Endothelial cell of umbilical vein (primary cell): ENCODE measurements at regions of chr11 and their contacts with region 1.

Region 1: GRCh38 chr11:47213985-47214564 is 699 bp upstream of the DDB2 start:
- DNase-seq: peak; percentile 77
- H3K4me3 ChIP-seq: peak overlapping the region in 2 of 3 experiments; percentile 18 to 58
- H3K27ac ChIP-seq: peak overlapping the region; percentile 40
- H3K4me1 ChIP-seq: peaks cover 23% of the 10 kb centered on the region
- H3K27me3 ChIP-seq: no peaks in the 10 kb centered on the region
- CTCF ChIP-seq: no peak
- POLR2A ChIP-seq: peak; percentile 8

Region 2: DNA sequence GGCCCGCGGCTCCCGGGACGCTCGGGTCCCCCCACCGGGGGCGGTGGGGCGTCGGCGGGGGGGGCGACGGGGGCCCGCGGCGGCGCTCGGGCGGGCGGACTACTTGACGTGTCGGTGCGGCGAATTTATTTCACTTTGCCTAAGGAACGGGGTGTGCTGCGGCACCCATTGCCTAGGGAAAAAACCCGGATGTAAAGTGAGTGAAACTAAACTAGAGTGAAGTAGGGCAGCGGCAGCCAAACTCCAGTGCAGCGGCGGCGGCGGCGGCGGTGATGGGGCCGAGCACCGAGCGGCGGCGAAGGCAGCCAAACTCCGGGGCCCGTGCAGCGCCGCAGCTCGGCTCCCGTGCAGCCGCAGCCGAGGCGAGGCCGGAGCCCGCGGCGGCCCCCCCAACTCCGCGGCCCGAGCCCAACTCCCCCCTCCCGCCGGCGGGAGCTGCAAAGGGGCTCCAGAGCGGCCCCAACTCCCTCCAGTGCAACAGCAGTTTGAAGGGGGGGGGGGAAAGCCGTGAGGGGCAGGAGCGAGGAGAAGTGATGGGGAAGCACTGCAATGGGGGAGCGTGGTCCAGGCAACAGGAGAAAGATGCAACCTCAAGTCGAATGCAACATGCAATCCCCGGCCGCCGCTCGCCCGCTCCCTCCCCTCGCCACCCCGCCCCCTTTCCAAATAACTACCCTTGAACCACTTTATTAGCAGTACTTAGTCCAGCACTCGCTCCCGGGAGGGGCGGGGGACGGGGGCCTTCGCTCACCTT is 1092.2 kb before region 1 on chr11:
- CTCF ChIA-PET with region 1: no interaction called
- POLR2A ChIA-PET with region 1: no interaction called
- dilution Hi-C with region 1: no loop called
- intact Hi-C with region 1: loop called (anchors 5 kb)
- DNase-seq: peak; percentile 78
- H3K4me3 ChIP-seq: peak overlapping the region; percentile 87 to 95 (median 92)
- H3K27ac ChIP-seq: peak overlapping the region; percentile 20
- H3K4me1 ChIP-seq: peaks cover 14% of the 10 kb centered on the region
- H3K27me3 ChIP-seq: no peaks in the 10 kb centered on the region
- CTCF ChIP-seq: no peak
- POLR2A ChIP-seq: peak; percentile 20

Region 3: DNA sequence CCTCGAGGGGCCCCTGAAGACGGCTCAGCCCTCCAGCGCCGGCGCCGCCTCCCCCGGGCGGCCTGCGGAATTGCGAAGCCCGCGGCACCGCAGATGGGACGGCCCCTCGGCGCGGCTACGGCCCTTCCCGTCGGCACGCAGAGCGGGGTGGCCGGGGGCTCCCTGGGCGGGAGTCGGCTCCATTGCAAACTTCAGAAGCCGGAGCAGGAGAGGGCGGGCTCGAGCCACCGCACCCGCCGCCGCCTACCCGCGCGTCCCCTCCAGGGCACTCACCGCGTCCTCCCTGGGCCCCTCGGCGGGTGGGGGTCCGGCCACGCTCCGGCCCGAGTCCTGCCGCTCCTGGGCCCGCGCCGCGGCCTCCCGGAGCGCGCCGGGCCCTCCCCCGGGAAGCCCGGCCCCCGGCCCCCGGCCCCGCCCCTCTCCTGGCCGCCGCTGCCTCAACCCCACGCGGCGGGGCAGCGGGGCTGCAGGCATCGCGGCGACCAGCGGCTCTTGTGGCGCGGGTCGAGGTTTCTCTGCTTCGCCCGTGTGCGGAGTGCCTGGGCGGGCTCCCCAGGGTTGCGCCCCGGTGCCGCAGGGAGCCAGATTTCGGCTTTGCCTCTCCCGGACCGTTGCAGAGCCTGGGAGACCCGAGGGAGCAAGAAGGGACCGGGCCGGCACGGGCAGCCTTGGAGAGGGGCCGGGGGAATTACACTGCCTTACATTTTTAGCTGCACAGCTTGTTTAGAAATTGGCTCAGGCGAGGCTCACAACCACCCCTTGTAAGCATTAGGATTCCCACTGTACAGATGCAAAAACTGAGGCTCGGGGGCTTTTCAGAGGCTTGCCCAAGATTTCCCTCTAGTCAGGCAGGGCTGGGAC is 27.8 kb before region 1 on chr11 and contains the start of gene PACSIN3:
- CTCF ChIA-PET with region 1: interaction called, 19 read pairs
- POLR2A ChIA-PET with region 1: interaction called, 8 read pairs
- dilution Hi-C with region 1: no loop called
- intact Hi-C with region 1: loop called (anchors 2 kb)
- DNase-seq: peak; percentile 60
- H3K4me3 ChIP-seq: peak within 1 kb of the TSS; percentile 65 to 76 (median 67)
- H3K27ac ChIP-seq: no peak within 1 kb of the TSS
- H3K4me1 ChIP-seq: peaks cover 16% of the 10 kb centered on the region
- H3K27me3 ChIP-seq: peaks cover 0 to 3% of the 10 kb centered on the region in 2 experiments
- CTCF ChIP-seq: peak in 1 of 2 donors; percentile 4
- POLR2A ChIP-seq: peak; percentile 39
- total RNA-seq, gene PACSIN3: 27.2 and 29.0 TPM in 2 replicates

Region 4: GRCh38 chr11:47248664-47249377 is 34.7 kb after region 1 on chr11 and contains the start of gene ACP2:
- CTCF ChIA-PET with region 1: interaction called, 4 read pairs
- POLR2A ChIA-PET with region 1: interaction called, 15 read pairs
- dilution Hi-C with region 1: no loop called
- intact Hi-C with region 1: loop called (anchors 2 kb)
- DNase-seq: peak; percentile 88
- H3K4me3 ChIP-seq: peak within 1 kb of the TSS; percentile 50 to 74 (median 68)
- H3K27ac ChIP-seq: peak within 1 kb of the TSS; percentile 49
- H3K4me1 ChIP-seq: peaks cover 13% of the 10 kb centered on the region
- H3K27me3 ChIP-seq: no peaks in the 10 kb centered on the region
- CTCF ChIP-seq: peak; percentile 7 to 34
- POLR2A ChIP-seq: peak; percentile 92
- total RNA-seq, gene ACP2: 35.6 and 39.7 TPM in 2 replicates

Region 5: GRCh38 chr11:47269002-47269828 is 55.1 kb after region 1 on chr11:
- CTCF ChIA-PET with region 1: interaction called, 3 read pairs
- POLR2A ChIA-PET with region 1: interaction called, 11 read pairs
- dilution Hi-C with region 1: no loop called
- intact Hi-C with region 1: loop called (anchors 1 kb)
- DNase-seq: peak; percentile 85
- H3K4me3 ChIP-seq: peak overlapping the region; percentile 66 to 93 (median 70)
- H3K27ac ChIP-seq: peak overlapping the region; percentile 76
- H3K4me1 ChIP-seq: peaks cover 37% of the 10 kb centered on the region
- H3K27me3 ChIP-seq: no peaks in the 10 kb centered on the region
- CTCF ChIP-seq: no peak
- POLR2A ChIP-seq: peak; percentile 8